Thyroid gland (tissue), 4 donors: ENCODE measurements at regions of chr2 and their contacts with region 1.

Region 1: DNA sequence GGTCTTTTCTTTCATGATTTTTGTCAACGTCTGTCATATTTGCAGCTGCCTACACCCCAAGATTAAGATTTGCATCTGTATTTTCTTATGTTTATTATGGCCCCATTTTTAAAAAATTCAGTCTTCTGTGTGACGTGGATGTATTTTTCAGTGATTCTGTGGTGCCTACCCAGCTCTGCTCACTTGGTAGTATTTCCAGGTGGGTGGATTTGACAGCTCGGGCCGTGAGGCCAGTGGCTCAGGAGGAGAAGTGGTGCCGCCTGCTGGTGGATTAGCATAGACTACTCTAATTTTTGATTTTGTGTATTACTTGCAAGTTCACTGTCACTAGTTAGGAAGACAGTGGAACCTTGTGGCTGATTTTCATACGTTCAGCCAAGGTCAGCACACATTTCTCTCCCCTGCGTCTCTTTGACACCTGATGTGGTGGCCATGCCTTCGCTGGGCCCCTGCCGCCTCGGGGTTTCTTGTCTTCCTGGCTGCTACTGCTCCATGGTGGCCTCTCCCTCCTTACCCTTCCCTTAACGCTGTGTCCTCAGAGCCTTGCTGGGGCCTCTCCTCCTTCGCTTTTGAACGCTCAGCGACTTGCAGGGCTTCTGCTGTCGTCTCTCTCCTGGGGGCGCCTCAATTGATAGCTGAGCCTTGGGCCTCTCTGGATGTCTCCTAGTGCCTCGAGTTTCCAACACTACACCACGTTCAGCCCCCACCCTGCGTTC is 89.3 kb downstream of the DGKD start:
- DNase-seq: peak; percentile 88 to 93
- H3K4me3 ChIP-seq: no peak overlapping the region
- H3K27ac ChIP-seq: no peak overlapping the region
- H3K4me1 ChIP-seq: peaks cover 0 to 4% of the 10 kb centered on the region in 2 donors
- H3K27me3 ChIP-seq: no peaks in the 10 kb centered on the region
- CTCF ChIP-seq: peak; percentile 56 to 97 (median 90)
- POLR2A ChIP-seq: no peak

Region 2: GRCh38 chr2:233270366-233270765 is 173.3 kb before region 1 on chr2:
- intact Hi-C with region 1: loop called (anchors 10 kb)
- DNase-seq: no peak
- H3K4me3 ChIP-seq: no peak overlapping the region
- H3K27ac ChIP-seq: peak overlapping the region; percentile 15 to 66 (median 38)
- H3K4me1 ChIP-seq: peaks cover 26 to 40% of the 10 kb centered on the region in 2 donors
- H3K27me3 ChIP-seq: no peaks in the 10 kb centered on the region
- CTCF ChIP-seq: no peak
- POLR2A ChIP-seq: no peak

Region 3: GRCh38 chr2:233353769-233354499 is 89.7 kb before region 1 on chr2 and contains the start of gene DGKD:
- intact Hi-C with region 1: loop called (anchors 5 kb)
- DNase-seq: peak; percentile 47 to 60
- H3K4me3 ChIP-seq: peak within 1 kb of the TSS; percentile 27 to 53 (median 47)
- H3K27ac ChIP-seq: peak within 1 kb of the TSS in 2 of 3 donors; percentile 17 to 68
- H3K4me1 ChIP-seq: peaks cover 15 to 34% of the 10 kb centered on the region in 2 donors
- H3K27me3 ChIP-seq: no peaks in the 10 kb centered on the region
- CTCF ChIP-seq: peak in 2 of 6 experiments; percentile 19 to 79
- POLR2A ChIP-seq: no peak
- total RNA-seq, gene DGKD: 22.3 to 71.7 (median 27.3) TPM

Region 4: GRCh38 chr2:233402346-233402745 is 41.3 kb before region 1 on chr2:
- intact Hi-C with region 1: loop called (anchors 2 kb)
- DNase-seq: no peak
- H3K4me3 ChIP-seq: no peak overlapping the region
- H3K27ac ChIP-seq: peak overlapping the region in 1 of 3 donors; percentile 30
- H3K4me1 ChIP-seq: no peaks in the 10 kb centered on the region
- H3K27me3 ChIP-seq: no peaks in the 10 kb centered on the region
- CTCF ChIP-seq: no peak
- POLR2A ChIP-seq: no peak

Region 5: GRCh38 chr2:233542507-233542906 is 98.9 kb after region 1 on chr2:
- intact Hi-C with region 1: no loop called
- DNase-seq: no peak
- H3K4me3 ChIP-seq: no peak overlapping the region
- H3K27ac ChIP-seq: no peak overlapping the region
- H3K4me1 ChIP-seq: peaks cover 0 to 22% of the 10 kb centered on the region in 2 donors
- H3K27me3 ChIP-seq: no peaks in the 10 kb centered on the region
- CTCF ChIP-seq: no peak
- POLR2A ChIP-seq: no peak